Activated CD4-positive, alpha-beta T cell treated with anti-CD3 and anti-CD28 coated beads, Interleukin-2, amount 10 ng/mL, durations not matched to agents 7 days and 5 days (primary cell): ENCODE measurements at regions of chr1 and their contacts with region 1.

Region 1: DNA sequence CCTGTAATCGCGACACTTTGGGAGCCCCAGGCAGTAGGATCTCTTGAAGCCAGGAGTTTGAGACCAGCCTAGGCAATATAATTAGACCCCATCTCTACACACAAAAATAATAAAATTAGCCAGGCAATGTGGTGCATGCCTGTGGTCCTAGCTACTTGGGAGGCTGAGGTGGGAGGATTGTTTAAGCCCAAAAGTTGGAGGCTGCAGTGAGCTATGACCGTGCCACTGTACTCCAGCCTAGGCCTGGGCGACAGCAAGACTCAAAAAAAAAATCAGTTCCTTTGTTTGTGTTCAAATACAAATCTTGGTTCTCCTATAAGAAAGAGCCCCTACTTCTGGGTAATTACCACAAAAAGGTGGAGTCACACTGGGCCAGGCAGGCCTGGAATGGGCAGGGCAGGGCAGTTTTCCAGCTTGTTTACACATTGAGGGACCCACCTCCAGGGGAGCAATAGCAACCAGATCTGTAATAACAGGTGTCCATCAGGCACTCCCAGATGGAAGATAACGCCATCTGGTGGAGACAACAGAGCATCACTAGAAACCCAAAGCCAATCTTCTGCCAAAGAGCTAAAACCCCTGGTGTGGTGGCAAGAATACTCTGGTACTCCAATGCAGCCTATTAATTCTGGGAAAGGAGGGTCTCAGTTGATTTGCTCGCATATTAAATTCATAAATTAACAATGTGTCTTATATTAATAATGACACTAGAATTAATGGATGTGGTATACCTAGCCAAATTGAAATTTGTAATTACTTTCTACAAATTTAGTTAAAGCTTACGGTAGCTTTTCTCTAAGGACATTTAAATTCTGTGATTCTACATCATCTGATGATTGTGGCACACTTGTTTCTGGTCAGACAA is 13.2 kb downstream of the PPP1R15B start:
- DNase-seq: peak; percentile 73
- H3K4me3 Mint-ChIP-seq: no peak overlapping the region
- H3K27ac Mint-ChIP-seq: peak overlapping the region; percentile 66
- H3K4me1 Mint-ChIP-seq: peaks cover 5% of the 10 kb centered on the region
- H3K27me3 Mint-ChIP-seq: no peaks in the 10 kb centered on the region

Region 2: DNA sequence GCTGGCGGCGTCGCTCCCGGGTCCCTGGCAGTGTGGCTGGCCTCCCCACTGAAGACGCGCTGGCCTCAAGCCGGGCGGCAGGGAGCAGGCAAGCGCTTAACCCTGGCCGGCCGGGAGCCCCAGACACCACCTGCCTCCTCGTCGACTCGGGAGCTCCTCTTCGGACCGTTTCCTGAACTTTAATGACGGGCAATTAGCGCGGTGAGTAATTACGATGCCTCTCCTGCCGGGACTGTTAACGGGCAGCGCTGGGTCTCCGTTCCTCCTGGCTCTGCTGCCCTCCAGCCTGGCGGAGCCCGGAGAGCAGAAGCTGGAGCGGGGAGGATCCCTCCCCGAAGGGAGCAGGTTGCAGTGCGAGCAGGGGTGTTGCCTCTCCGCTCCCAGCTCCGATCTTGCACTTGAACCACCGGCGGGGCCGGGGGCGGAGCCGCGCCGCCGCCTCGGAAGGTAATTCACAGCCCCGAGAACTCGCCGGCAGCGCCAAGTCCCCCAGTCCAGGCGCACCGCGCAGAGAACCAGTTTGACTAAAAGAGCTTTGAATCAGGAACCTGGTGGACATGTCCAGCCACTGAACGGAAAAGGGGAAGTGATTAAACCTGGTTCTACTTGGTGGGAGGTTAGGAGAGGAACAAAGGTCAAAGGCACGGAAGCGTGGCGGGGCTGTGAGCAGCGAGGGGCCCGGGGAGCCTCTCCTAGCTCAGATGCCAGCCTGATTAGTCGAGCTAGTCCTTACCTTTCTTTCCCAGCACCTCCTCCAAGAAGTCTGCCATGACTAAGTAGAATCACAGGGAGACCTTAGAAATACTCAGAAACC is 20.4 kb before region 1 on chr1:
- CTCF ChIA-PET with region 1: interaction called, 12 read pairs
- POLR2A ChIA-PET with region 1: interaction called, 3 read pairs
- DNase-seq: peak; percentile 40
- H3K4me3 Mint-ChIP-seq: peak overlapping the region; percentile 70
- H3K27ac Mint-ChIP-seq: no peak overlapping the region
- H3K4me1 Mint-ChIP-seq: peaks cover 10% of the 10 kb centered on the region
- H3K27me3 Mint-ChIP-seq: peaks cover 34% of the 10 kb centered on the region

Region 3: DNA sequence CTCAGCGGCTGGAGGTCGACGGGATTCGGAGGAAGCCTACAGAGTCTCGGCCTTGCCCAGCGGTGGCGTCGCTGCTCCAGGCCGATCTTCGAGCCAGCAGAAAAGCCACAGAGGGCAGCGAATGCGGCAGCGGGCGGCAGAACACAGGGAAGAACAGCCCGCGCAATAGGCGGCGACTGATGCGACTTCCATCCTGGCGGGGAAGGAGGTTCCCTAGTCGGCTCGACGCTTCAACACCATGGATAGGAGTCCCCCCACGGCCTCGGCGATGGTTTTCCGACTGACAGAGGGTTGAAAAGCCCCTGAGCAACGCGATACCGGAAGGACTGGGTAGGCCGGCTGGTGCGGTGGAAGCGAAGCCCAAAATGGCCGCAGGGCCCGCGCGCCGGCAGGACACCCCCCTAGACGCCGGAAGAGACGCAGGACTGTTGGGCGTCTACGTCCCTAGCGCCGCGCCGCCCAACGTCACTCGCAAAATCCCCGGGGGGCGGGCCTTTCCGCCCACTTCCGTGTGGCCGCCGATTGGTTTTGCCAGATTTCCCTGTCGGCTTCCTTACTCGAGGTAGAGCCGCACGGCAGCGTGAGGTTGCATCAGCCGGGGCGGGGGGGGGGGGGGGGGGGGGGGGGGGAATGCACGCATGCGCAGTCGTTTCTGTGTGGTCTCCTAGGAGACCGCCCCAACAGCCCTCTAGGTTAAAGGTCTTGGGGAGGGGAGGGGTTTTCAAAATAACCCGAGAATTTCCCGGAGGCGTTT is 13.2 kb after region 1 on chr1 and contains the start of gene PPP1R15B:
- CTCF ChIA-PET with region 1: interaction called, 16 read pairs
- POLR2A ChIA-PET with region 1: interaction called, 5 read pairs
- DNase-seq: peak; percentile 97
- H3K4me3 Mint-ChIP-seq: peak within 1 kb of the TSS; percentile 99
- H3K27ac Mint-ChIP-seq: peak within 1 kb of the TSS; percentile 99
- H3K4me1 Mint-ChIP-seq: peaks cover 16% of the 10 kb centered on the region
- H3K27me3 Mint-ChIP-seq: no peaks in the 10 kb centered on the region
- total RNA-seq, gene PPP1R15B: 62.5 to 70.6 TPM

Region 4: GRCh38 chr1:204516180-204516879 is 117.9 kb after region 1 on chr1 and contains the start of gene MDM4:
- CTCF ChIA-PET with region 1: interaction called, 12 read pairs
- POLR2A ChIA-PET with region 1: no interaction called
- DNase-seq: peak; percentile 95
- H3K4me3 Mint-ChIP-seq: no peak within 1 kb of the TSS
- H3K27ac Mint-ChIP-seq: no peak within 1 kb of the TSS
- H3K4me1 Mint-ChIP-seq: peaks cover 74% of the 10 kb centered on the region
- H3K27me3 Mint-ChIP-seq: no peaks in the 10 kb centered on the region
- total RNA-seq, gene MDM4: 95.0 to 98.1 TPM